K562 (cell line): ENCODE measurements at regions of chr6 and their contacts with region 1.

Region 1: GRCh38 chr6:131909408-131910218 is 41.6 kb downstream of the CCN2 start:
- DNase-seq: peak; percentile 52 to 77 (median 64)
- ATAC-seq: peak; percentile 99
- H3K4me3 ChIP-seq: no peak overlapping the region
- H3K27ac ChIP-seq: no peak overlapping the region
- H3K4me1 ChIP-seq: no peaks in the 10 kb centered on the region
- H3K27me3 ChIP-seq: no peaks in the 10 kb centered on the region; a peak in 1 of 5 replicates
- CTCF ChIP-seq: peak; percentile 71 to 84 (median 78)
- EP300 ChIP-seq: no peak
- POLR2A ChIP-seq: no peak
- RAD21 ChIP-seq: peak; percentile 81 to 85

Region 2: DNA sequence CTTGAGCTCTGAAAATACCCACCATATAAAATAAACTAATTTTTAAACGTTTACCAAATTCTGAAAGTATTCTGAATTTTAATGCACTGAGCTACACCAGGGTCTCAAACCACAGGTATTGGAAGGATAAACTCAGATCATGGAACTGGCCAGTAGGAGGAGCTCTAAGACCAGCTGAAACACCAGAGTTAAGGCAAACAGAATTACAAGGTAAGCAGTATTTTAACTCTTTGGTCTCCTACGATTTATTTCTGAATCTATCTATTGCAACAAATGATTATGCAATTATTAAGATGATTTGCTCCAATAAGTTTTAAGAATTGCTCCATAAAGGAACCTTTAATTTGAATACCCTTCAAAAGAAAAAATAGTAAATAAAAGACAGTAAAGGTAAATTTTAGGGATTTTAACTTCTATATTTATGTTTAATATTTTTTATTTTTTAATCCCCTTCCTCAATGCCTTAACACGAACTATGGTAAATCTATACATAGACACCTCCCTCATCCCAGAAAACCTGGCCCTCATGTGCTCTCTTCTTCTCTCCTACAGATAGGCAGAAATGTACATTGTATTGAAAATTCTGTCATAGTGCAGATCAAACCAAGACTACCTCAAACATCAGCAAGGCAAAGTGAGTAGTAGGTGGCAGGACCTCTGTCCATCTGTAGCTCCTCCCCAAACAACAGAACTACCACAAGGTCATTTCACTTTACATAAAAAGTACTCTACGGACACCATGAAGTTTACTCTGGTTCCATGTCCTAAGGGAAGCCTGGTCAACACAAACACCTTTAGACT is 1024.0 kb before region 1 on chr6:
- CTCF ChIA-PET with region 1: no interaction called
- POLR2A ChIA-PET with region 1: no interaction called
- in situ Hi-C with region 1: no loop called
- intact Hi-C with region 1: loop called (anchors 5 kb)
- DNase-seq: peak; percentile 58 to 82 (median 68)
- ATAC-seq: peak; percentile 98
- H3K4me3 ChIP-seq: no peak overlapping the region
- H3K27ac ChIP-seq: no peak overlapping the region
- H3K4me1 ChIP-seq: no peaks in the 10 kb centered on the region
- H3K27me3 ChIP-seq: no peaks in the 10 kb centered on the region
- CTCF ChIP-seq: peak; percentile 75 to 92 (median 81)
- EP300 ChIP-seq: no peak
- POLR2A ChIP-seq: no peak
- RAD21 ChIP-seq: peak; percentile 94 to 98

Region 3: DNA sequence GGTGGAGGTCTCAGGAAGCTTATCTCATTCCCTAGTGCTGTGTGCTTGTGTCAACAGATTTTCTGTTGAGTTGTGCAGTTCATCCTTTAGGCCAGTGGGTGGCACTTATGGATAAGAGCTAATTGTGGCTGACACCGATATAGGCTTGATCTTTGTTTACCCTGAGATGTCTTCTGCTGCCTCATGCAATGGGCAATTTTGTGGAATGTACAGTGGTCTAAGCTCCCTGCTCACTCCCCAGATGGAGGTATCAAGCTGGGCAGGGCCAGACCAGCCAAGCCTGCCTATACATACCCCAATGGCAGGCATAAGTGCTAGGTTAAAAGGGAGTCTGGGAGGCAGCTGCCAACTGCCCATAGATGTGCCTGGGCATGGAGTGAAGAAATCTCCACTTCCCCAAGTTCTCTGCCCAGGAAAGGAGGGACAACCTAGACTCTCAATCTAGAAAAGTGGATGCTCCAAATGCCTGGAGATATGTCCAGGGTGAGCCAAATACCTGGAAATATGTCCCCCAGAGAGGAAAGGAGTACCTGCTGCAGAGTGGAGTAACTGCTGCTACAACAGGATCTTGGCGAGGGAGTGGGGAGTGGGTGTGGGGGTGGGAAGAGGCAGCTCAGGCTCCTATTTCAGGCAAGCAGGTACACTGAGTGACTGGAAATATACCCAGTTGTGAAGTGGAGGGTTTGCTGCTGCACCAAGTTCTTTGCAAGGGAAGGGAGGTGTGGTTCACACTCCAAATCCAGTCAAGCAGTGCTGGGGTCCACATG is 389.8 kb before region 1 on chr6:
- CTCF ChIA-PET with region 1: no interaction called
- POLR2A ChIA-PET with region 1: no interaction called
- in situ Hi-C with region 1: no loop called
- intact Hi-C with region 1: loop called (anchors 2 kb)
- DNase-seq: peak; percentile 23 to 55 (median 35)
- ATAC-seq: peak; percentile 98
- H3K4me3 ChIP-seq: no peak overlapping the region
- H3K27ac ChIP-seq: no peak overlapping the region
- H3K4me1 ChIP-seq: no peaks in the 10 kb centered on the region
- H3K27me3 ChIP-seq: 0 out of 5 replicates have a peak, but pooled peaks cover 0 to 3% of the 10 kb centered on the region in 2 experiments
- CTCF ChIP-seq: peak; percentile 56 to 64 (median 61)
- EP300 ChIP-seq: no peak
- POLR2A ChIP-seq: no peak
- RAD21 ChIP-seq: peak; percentile 23 to 68; a peak in 2 of 4 replicates

Region 4: GRCh38 chr6:131694831-131695426 is 214.7 kb before region 1 on chr6:
- CTCF ChIA-PET with region 1: interaction called, 7 read pairs
- POLR2A ChIA-PET with region 1: no interaction called
- in situ Hi-C with region 1: loop called (anchors 10 kb)
- intact Hi-C with region 1: loop called (anchors 1 kb)
- DNase-seq: peak; percentile 47 to 72 (median 58)
- ATAC-seq: peak; percentile 99
- H3K4me3 ChIP-seq: no peak overlapping the region
- H3K27ac ChIP-seq: no peak overlapping the region
- H3K4me1 ChIP-seq: no peaks in the 10 kb centered on the region
- H3K27me3 ChIP-seq: no peaks in the 10 kb centered on the region
- CTCF ChIP-seq: peak; percentile 70 to 78 (median 74)
- EP300 ChIP-seq: no peak
- POLR2A ChIP-seq: no peak
- RAD21 ChIP-seq: peak; percentile 37 to 80

Region 5: GRCh38 chr6:131780600-131780999 is 129.0 kb before region 1 on chr6:
- CTCF ChIA-PET with region 1: interaction called, 5 read pairs
- POLR2A ChIA-PET with region 1: no interaction called
- in situ Hi-C with region 1: no loop called
- intact Hi-C with region 1: loop called (anchors 1 kb)
- DNase-seq: no peak
- ATAC-seq: peak; percentile 74
- H3K4me3 ChIP-seq: no peak overlapping the region
- H3K27ac ChIP-seq: no peak overlapping the region
- H3K4me1 ChIP-seq: no peaks in the 10 kb centered on the region
- H3K27me3 ChIP-seq: peaks cover 3 to 15% of the 10 kb centered on the region in 2 experiments; a peak in 4 of 5 replicates
- CTCF ChIP-seq: 0 out of 6 replicates have a peak, but pooled peaks of 1 of the 3 experiments have one; percentile 18
- EP300 ChIP-seq: no peak
- POLR2A ChIP-seq: no peak
- RAD21 ChIP-seq: 0 out of 4 replicates have a peak, but pooled peaks of 1 of the 2 experiments have one; percentile 23